HepG2 (cell line): ENCODE measurements at regions of chr14 and their contacts with region 1.

Region 1: GRCh38 chr14:25032092-25032784 is 17.7 kb downstream of the STXBP6 start:
- DNase-seq: peak; percentile 84
- ATAC-seq: peak; percentile 82
- H3K4me3 ChIP-seq: peak overlapping the region; percentile 25 to 62 (median 56)
- H3K27ac ChIP-seq: peak overlapping the region; percentile 6
- H3K4me1 ChIP-seq: peaks cover 48% of the 10 kb centered on the region
- H3K27me3 ChIP-seq: no peaks in the 10 kb centered on the region
- CTCF ChIP-seq: peak; percentile 94
- EP300 ChIP-seq: no peak
- POLR2A ChIP-seq: peak; percentile 31 to 46; a peak in 1 of 4 replicates
- RAD21 ChIP-seq: peak; percentile 88

Region 2: DNA sequence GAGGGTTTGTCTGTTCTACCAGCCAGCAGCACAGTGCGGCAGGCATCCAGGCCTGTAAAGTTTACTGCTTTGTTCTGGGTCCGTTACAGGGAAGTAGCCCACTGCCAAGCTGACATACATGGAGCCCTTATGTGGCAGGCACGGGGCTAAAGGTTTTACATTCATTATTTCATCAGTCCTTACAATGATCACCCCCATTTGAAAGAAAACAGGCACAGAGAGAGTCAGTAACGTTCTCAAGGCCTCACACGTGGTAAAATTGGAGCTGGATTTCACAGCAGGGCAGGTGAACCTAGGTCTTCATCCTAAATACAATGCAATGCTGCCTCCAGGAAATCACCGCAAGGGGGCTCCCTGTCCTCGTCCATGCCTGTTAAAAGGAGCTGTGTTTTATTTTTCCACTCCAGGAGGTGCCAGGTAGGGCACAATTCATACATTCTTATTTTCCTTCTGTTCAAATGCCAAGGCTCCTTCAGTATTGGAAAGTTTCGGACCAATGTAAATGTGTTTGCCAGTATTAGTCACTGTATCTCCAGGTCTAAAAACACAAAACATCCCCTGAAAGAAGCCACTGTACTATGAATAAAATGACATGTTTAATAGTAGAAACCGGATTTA is 226.1 kb before region 1 on chr14:
- CTCF ChIA-PET with region 1: interaction called, 28 read pairs
- POLR2A ChIA-PET with region 1: interaction called, 3 read pairs
- in situ Hi-C with region 1: no loop called
- intact Hi-C with region 1: loop called (anchors 1 kb)
- DNase-seq: peak; percentile 88
- ATAC-seq: peak; percentile 81
- H3K4me3 ChIP-seq: no peak overlapping the region
- H3K27ac ChIP-seq: no peak overlapping the region
- H3K4me1 ChIP-seq: peaks cover 58% of the 10 kb centered on the region
- H3K27me3 ChIP-seq: no peaks in the 10 kb centered on the region
- CTCF ChIP-seq: peak; percentile 99
- EP300 ChIP-seq: no peak
- POLR2A ChIP-seq: no peak
- RAD21 ChIP-seq: peak; percentile 99

Region 3: GRCh38 chr14:24887623-24888293 is 144.5 kb before region 1 on chr14:
- CTCF ChIA-PET with region 1: no interaction called
- POLR2A ChIA-PET with region 1: no interaction called
- in situ Hi-C with region 1: no loop called
- intact Hi-C with region 1: loop called (anchors 5 kb)
- DNase-seq: no peak
- ATAC-seq: no peak
- H3K4me3 ChIP-seq: no peak overlapping the region
- H3K27ac ChIP-seq: no peak overlapping the region
- H3K4me1 ChIP-seq: peaks cover 49% of the 10 kb centered on the region
- H3K27me3 ChIP-seq: no peaks in the 10 kb centered on the region
- CTCF ChIP-seq: no peak
- EP300 ChIP-seq: no peak; a peak in 1 of 4 replicates
- POLR2A ChIP-seq: no peak
- RAD21 ChIP-seq: no peak

Region 4: GRCh38 chr14:24952851-24953666 is 79.2 kb before region 1 on chr14:
- CTCF ChIA-PET with region 1: interaction called, 3 read pairs
- POLR2A ChIA-PET with region 1: no interaction called
- in situ Hi-C with region 1: no loop called
- intact Hi-C with region 1: loop called (anchors 2 kb)
- DNase-seq: peak; percentile 81
- ATAC-seq: peak; percentile 99
- H3K4me3 ChIP-seq: no peak overlapping the region
- H3K27ac ChIP-seq: no peak overlapping the region
- H3K4me1 ChIP-seq: peaks cover 15% of the 10 kb centered on the region; the same call in 1 of the 2 replicates
- H3K27me3 ChIP-seq: no peaks in the 10 kb centered on the region
- CTCF ChIP-seq: peak; percentile 67
- EP300 ChIP-seq: no peak
- POLR2A ChIP-seq: no peak
- RAD21 ChIP-seq: peak; percentile 72; the same call in 1 of the 2 replicates

Region 5: GRCh38 chr14:25049568-25050268 is 17.5 kb after region 1 on chr14 and contains the start of gene STXBP6:
- CTCF ChIA-PET with region 1: no interaction called
- POLR2A ChIA-PET with region 1: interaction called, 10 read pairs
- in situ Hi-C with region 1: no loop called
- intact Hi-C with region 1: no loop called
- DNase-seq: peak; percentile 65
- ATAC-seq: peak; percentile 97
- H3K4me3 ChIP-seq: peak within 1 kb of the TSS; percentile 65 to 82 (median 73)
- H3K27ac ChIP-seq: no peak within 1 kb of the TSS
- H3K4me1 ChIP-seq: peaks cover 41% of the 10 kb centered on the region
- H3K27me3 ChIP-seq: peaks cover 0 to 25% of the 10 kb centered on the region in 2 experiments; a peak in 3 of 5 replicates
- CTCF ChIP-seq: peak; percentile 6; the same call in 1 of the 2 replicates
- EP300 ChIP-seq: no peak
- POLR2A ChIP-seq: peak in 1 of 2 experiments; percentile 58; a peak in 1 of 4 replicates
- RAD21 ChIP-seq: 0 out of 2 replicates have a peak, but pooled peaks have one; percentile 68
- total RNA-seq, gene STXBP6: 35.3 and 43.2 TPM in 2 replicates

Region 6: GRCh38 chr14:25322784-25323183 is 290.5 kb after region 1 on chr14:
- CTCF ChIA-PET with region 1: no interaction called
- POLR2A ChIA-PET with region 1: no interaction called
- in situ Hi-C with region 1: no loop called
- intact Hi-C with region 1: no loop called
- DNase-seq: no peak
- ATAC-seq: no peak
- H3K4me3 ChIP-seq: no peak overlapping the region
- H3K27ac ChIP-seq: no peak overlapping the region
- H3K4me1 ChIP-seq: no peaks in the 10 kb centered on the region
- H3K27me3 ChIP-seq: no peaks in the 10 kb centered on the region
- CTCF ChIP-seq: no peak
- EP300 ChIP-seq: no peak
- POLR2A ChIP-seq: no peak
- RAD21 ChIP-seq: no peak